Head of caudate nucleus (tissue), 42 donors: ENCODE measurements at regions of chr6 and their contacts with region 1.

Region 1: DNA sequence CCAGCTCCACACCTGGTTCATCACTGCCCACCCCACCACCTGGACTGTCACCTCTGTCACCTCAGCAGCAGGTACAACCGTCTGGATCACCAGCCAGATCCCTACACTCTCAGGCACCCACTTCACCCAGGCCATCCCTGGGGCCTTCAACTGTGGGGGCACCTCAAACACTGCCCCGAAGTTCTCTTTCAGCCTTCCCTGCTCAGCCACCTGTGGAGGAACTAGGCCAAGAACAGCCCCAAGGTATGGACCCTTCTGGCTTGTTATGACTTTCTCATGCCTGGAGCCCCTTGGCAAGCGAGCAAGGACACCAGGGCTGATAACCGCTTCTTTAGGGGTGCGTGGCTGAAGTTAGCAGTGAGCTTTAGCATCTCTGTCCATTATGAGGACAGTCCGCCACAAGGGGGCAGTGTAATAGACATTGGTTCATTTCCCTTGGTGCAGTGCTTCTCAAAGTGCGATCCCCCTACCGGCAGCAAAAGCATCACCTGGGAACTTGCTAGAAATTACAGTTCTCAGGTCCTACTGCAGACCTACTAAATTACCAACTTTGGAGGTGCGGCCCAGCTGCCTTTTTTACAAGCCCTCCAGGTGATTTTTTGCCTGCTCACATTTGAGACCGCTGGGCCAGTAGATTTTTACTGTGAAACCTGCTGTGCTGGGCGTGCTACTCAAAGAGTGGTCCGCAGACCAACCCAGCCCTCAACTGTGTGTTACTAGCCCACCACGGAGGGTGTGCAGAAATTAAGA is 32.5 kb downstream of the PNPLA1 start:
- DNase-seq: peak; percentile 60 to 96 (median 89)

Region 2: DNA sequence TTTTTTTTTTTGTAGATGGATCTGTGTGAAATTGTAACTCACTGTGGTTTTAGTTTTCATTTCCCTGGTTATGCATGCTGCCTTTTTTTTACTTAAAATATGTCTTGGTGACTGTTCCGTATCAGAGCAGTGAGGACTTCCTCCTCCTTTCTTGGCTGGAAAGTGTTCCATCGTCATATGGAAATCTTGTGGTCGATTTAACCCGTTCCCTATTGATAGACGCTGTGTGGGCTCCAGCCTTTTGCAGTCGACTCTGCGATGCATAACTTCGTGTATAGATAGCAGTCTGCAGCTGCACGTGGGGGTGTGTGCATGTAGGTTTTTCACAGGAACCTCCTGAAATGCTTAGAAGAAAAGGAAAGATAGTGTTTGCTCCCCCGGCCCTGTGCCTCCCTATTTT is 60.7 kb before region 1 on chr6:
- intact Hi-C with region 1: no loop called
- DNase-seq: peak in 34 of 42 donors; percentile 4 to 82 (median 40)

Region 3: GRCh38 chr6:36360241-36361054 is 58.0 kb after region 1 on chr6:
- intact Hi-C with region 1: loop called (anchors 5 kb)
- DNase-seq: peak; percentile 62 to 93 (median 82)

Region 4: DNA sequence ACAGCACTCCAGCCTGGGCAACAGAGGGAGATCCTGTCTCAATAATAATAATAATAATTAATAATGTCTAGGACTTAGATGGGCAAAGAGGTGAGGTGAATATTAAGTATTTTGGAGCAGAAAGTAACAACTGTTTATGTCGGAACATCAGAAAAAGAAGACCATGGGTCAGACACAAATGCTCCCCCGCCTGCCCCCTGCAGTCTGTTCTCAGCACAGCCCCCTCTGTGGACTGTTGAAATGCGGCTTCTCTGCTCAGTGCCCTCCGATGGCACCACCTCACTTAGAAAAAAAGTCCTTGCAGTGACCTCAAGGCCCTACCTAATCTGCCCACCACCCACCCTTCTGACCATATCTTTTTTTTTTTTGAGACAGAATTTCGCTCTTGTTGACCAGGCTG is 90.2 kb after region 1 on chr6:
- intact Hi-C with region 1: no loop called
- DNase-seq: no peak